H1 (cell line): ENCODE measurements at regions of chr6 and their contacts with region 1.

Region 1: GRCh38 chr6:141088171-141088570 is 1044.6 kb upstream of the GJE1 start:
- DNase-seq: no peak
- H3K4me3 ChIP-seq: no peak overlapping the region
- H3K27ac ChIP-seq: no peak overlapping the region
- H3K4me1 ChIP-seq: no peaks in the 10 kb centered on the region
- H3K27me3 ChIP-seq: no peaks in the 10 kb centered on the region
- CTCF ChIP-seq: no peak
- EP300 ChIP-seq: no peak
- POLR2A ChIP-seq: no peak
- RAD21 ChIP-seq: no peak

Region 2: GRCh38 chr6:141077355-141078333 is 10.5 kb before region 1 on chr6:
- CTCF ChIA-PET with region 1: interaction called, 11 read pairs
- POLR2A ChIA-PET with region 1: no interaction called
- DNase-seq: peak; percentile 23 to 50
- H3K4me3 ChIP-seq: no peak overlapping the region
- H3K27ac ChIP-seq: no peak overlapping the region
- H3K4me1 ChIP-seq: no peaks in the 10 kb centered on the region
- H3K27me3 ChIP-seq: no peaks in the 10 kb centered on the region
- CTCF ChIP-seq: peak; percentile 63 to 98 (median 72)
- EP300 ChIP-seq: no peak
- POLR2A ChIP-seq: no peak
- RAD21 ChIP-seq: peak; percentile 57 to 64

Region 3: DNA sequence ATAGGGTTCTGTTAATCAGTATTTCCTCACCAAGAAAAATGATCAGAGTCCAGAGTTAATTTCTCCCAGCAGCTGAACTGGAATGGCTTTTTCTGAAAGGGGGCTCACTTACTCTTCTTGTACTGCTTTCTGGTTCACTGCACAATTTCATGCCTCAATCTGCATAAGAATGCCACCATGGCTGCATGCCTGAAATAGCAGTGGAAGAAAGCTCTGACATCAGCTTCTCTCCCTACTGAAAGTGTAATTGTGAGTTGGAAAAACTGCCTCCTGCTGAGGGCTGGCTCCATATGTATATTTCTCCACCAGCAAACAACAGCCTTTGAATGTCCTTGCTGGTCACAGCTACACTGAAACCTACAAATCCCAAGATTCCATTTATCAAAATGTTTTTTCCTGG is 17.3 kb after region 1 on chr6:
- CTCF ChIA-PET with region 1: no interaction called
- POLR2A ChIA-PET with region 1: no interaction called
- DNase-seq: peak in 1 of 2 experiments; percentile 75
- H3K4me3 ChIP-seq: peak overlapping the region in 1 of 4 experiments; percentile 4; a peak in 1 of 8 replicates
- H3K27ac ChIP-seq: peak overlapping the region; percentile 75
- H3K4me1 ChIP-seq: peaks cover 0 to 5% (median 1%) of the 10 kb centered on the region in 4 experiments; a peak in 2 of 7 replicates
- H3K27me3 ChIP-seq: no peaks in the 10 kb centered on the region
- CTCF ChIP-seq: no peak
- EP300 ChIP-seq: no peak; a peak in 1 of 3 replicates
- POLR2A ChIP-seq: no peak
- RAD21 ChIP-seq: 0 out of 4 replicates have a peak, but pooled peaks of 1 of the 2 experiments have one; percentile 8

Region 4: DNA sequence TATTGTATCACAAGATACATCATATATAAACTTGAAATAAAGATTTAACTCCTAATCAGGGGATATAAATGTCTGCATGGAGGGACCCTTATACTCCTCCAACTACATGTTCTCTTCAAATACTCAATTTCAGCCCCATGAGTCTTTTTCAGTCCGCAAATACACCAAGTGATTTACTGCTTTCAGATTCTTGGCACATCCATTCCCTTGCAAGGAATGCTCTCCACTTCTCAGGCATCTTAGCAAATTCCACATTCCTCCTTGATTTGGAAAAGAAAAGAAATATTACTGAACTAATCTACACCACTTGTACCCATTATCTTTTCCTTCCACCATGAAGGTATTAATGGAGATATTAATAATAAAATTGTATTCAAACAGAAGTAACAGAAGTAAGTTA is 45.2 kb after region 1 on chr6:
- CTCF ChIA-PET with region 1: no interaction called
- POLR2A ChIA-PET with region 1: no interaction called
- DNase-seq: no peak
- H3K4me3 ChIP-seq: no peak overlapping the region
- H3K27ac ChIP-seq: no peak overlapping the region
- H3K4me1 ChIP-seq: no peaks in the 10 kb centered on the region
- H3K27me3 ChIP-seq: no peaks in the 10 kb centered on the region
- CTCF ChIP-seq: no peak
- EP300 ChIP-seq: no peak
- POLR2A ChIP-seq: no peak
- RAD21 ChIP-seq: no peak